ENCODE measurements at regions of chr9 and their contacts with region 1.

Region 1: DNA sequence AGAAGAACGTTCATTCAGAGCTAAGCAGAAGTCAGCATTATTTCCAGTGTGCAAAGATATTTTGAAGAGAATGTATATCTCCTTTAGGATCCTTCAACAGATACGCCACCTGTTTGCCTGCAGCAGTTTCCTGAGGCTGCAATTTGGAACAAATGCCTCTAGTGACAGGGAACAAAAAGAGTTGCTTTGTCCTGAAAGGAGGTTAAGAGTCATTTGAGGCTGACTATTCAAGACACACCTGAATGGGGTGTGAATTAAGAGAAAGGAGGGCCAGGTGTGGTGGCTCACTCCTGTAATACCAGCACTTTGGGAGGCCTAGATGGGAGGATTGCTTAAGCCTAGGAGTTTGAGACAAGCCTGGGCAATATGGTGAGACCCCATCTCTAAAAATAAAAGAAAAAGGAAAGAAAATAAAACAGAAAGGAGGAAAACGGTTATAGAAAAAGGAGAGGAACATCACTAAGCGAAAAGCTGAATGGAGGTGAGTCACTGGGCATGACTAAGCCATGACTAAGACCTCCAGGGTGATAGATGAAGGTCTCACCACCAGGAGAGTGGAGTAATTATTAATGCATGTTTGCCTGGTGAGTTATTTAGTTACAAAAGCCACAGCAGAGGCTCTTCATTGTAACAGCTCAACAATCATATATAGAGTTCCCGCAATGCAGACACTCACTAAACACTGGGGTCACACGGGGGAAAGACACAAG is 255.2 kb upstream of the TNC start:
- DNase-seq: peak; percentile 72
- H3K4me3 Mint-ChIP-seq: peak overlapping the region; percentile 15
- H3K27ac Mint-ChIP-seq: peak overlapping the region; percentile 72
- H3K4me1 Mint-ChIP-seq: peaks cover 21% of the 10 kb centered on the region
- H3K27me3 Mint-ChIP-seq: no peaks in the 10 kb centered on the region
- CTCF ChIP-seq: no peak

Region 2: DNA sequence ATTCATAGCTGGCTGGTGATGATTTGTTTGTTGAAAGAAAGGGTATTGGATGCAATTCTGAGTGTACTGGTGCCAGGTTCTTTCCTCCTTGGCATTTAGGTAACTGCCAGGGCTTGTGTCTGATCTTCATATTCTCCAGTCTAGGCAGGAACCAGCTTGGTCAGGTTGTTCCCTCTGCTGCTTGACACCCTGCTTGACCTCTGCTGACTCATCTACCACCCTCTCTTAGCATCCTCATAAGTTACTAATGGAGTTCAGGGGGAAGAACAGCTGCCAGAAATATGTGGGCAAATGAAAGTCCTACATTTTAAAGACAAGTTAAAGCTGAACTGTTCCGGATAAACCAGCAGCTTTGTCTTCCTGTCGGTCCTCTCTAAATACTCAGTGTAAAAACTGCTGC is 139.1 kb before region 1 on chr9:
- CTCF ChIA-PET with region 1: no interaction called
- intact Hi-C with region 1: loop called (anchors 2 kb)
- DNase-seq: peak; percentile 58
- H3K4me3 Mint-ChIP-seq: no peak overlapping the region
- H3K27ac Mint-ChIP-seq: peak overlapping the region; percentile 18
- H3K4me1 Mint-ChIP-seq: peaks cover 30% of the 10 kb centered on the region
- H3K27me3 Mint-ChIP-seq: no peaks in the 10 kb centered on the region
- CTCF ChIP-seq: no peak

Region 3: GRCh38 chr9:115444959-115445358 is 71.8 kb after region 1 on chr9:
- CTCF ChIA-PET with region 1: no interaction called
- intact Hi-C with region 1: no loop called
- DNase-seq: no peak
- H3K4me3 Mint-ChIP-seq: no peak overlapping the region
- H3K27ac Mint-ChIP-seq: no peak overlapping the region
- H3K4me1 Mint-ChIP-seq: no peaks in the 10 kb centered on the region
- H3K27me3 Mint-ChIP-seq: no peaks in the 10 kb centered on the region
- CTCF ChIP-seq: no peak

Region 4: GRCh38 chr9:115495052-115495635 is 122.0 kb after region 1 on chr9:
- CTCF ChIA-PET with region 1: no interaction called
- intact Hi-C with region 1: loop called (anchors 10 kb)
- DNase-seq: no peak
- H3K4me3 Mint-ChIP-seq: no peak overlapping the region
- H3K27ac Mint-ChIP-seq: no peak overlapping the region
- H3K4me1 Mint-ChIP-seq: peaks cover 15% of the 10 kb centered on the region
- H3K27me3 Mint-ChIP-seq: peaks cover 14% of the 10 kb centered on the region
- CTCF ChIP-seq: no peak

Measured in Calu3 (cell line).